ENCODE measurements at regions of chr19 and their contacts with region 1.

Region 1: GRCh38 chr19:49676690-49677231 is 310 bp upstream of the PRMT1 start:
- H3K4me3 ChIP-seq: peak overlapping the region; percentile 76
- H3K27ac ChIP-seq: peak overlapping the region; percentile 94
- H3K4me1 ChIP-seq: peaks cover 22% of the 10 kb centered on the region
- CTCF ChIP-seq: no peak

Region 2: GRCh38 chr19:49497047-49497788 is 179.5 kb before region 1 on chr19:
- CTCF ChIA-PET with region 1: interaction called, 8 read pairs
- POLR2A ChIA-PET with region 1: interaction called, 15 read pairs
- H3K4me3 ChIP-seq: peak overlapping the region; percentile 89
- H3K27ac ChIP-seq: peak overlapping the region; percentile 87
- H3K4me1 ChIP-seq: peaks cover 7% of the 10 kb centered on the region
- CTCF ChIP-seq: no peak

Region 3: GRCh38 chr19:49546825-49547565 is 129.8 kb before region 1 on chr19:
- CTCF ChIA-PET with region 1: interaction called, 17 read pairs
- POLR2A ChIA-PET with region 1: interaction called, 8 read pairs
- H3K4me3 ChIP-seq: no peak overlapping the region
- H3K27ac ChIP-seq: peak overlapping the region; percentile 54
- H3K4me1 ChIP-seq: peaks cover 9% of the 10 kb centered on the region
- CTCF ChIP-seq: peak; percentile 68

Region 4: GRCh38 chr19:49580264-49581006 is 96.3 kb before region 1 on chr19 and contains the start of gene NOSIP:
- CTCF ChIA-PET with region 1: interaction called, 10 read pairs
- POLR2A ChIA-PET with region 1: interaction called, 18 read pairs
- H3K4me3 ChIP-seq: peak within 1 kb of the TSS; percentile 67
- H3K27ac ChIP-seq: peak within 1 kb of the TSS; percentile 58
- H3K4me1 ChIP-seq: peaks cover 9% of the 10 kb centered on the region
- CTCF ChIP-seq: no peak

Region 5: DNA sequence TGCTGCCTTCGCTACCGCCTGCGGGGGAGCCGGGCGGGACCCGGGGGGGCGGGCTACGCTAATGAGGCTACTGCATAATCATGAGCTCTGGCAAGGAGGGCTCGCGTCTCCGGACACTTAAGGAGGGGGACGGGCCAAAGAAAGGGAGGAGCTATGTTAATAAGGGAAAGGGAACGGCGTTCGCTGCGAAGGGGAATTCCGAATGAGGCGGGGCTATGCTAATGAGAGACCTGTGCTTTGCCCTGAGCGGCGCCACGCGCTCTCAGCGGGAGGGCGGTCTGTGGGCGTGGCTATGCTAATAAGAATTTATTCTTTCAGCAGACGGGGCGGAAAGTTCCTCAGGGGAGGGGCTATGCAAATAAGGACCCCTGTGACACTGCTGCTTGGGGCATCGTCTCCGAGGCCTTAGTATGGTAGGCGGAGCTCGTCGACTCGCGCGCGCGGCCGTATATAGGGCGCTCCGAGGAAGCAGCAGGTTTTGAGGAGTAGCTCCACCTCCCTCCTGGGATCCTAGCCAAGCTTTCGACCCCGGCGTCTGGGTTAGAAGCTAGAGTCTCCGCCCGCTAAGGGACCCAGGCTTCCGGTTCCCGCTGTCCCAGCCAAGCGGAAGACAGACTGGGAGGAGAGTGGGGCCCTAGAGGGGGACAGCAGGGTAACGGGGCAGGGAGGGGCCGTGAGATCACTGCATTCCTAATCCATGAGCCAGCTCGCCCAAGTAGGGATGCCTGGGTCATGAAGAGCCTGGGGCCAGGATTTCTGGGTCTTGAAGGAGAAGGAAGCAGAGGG is 36.5 kb before region 1 on chr19 and contains the start of gene RRAS:
- CTCF ChIA-PET with region 1: interaction called, 59 read pairs
- POLR2A ChIA-PET with region 1: interaction called, 56 read pairs
- H3K4me3 ChIP-seq: peak within 1 kb of the TSS; percentile 51
- H3K27ac ChIP-seq: peak within 1 kb of the TSS; percentile 98
- H3K4me1 ChIP-seq: peaks cover 31% of the 10 kb centered on the region
- CTCF ChIP-seq: no peak

Region 6: GRCh38 chr19:49658566-49659442 is 18.0 kb before region 1 on chr19:
- CTCF ChIA-PET with region 1: interaction called, 27 read pairs
- POLR2A ChIA-PET with region 1: interaction called, 56 read pairs
- H3K4me3 ChIP-seq: no peak overlapping the region
- H3K27ac ChIP-seq: no peak overlapping the region
- H3K4me1 ChIP-seq: no peaks in the 10 kb centered on the region
- CTCF ChIP-seq: no peak

Region 7: GRCh38 chr19:49701271-49701786 is 24.6 kb after region 1 on chr19:
- CTCF ChIA-PET with region 1: interaction called, 10 read pairs
- POLR2A ChIA-PET with region 1: no interaction called
- H3K4me3 ChIP-seq: no peak overlapping the region
- H3K27ac ChIP-seq: no peak overlapping the region
- H3K4me1 ChIP-seq: no peaks in the 10 kb centered on the region
- CTCF ChIP-seq: no peak

Measured in HEK293 (cell line).